ENCODE measurements at regions of chr19 and their contacts with region 1.

Region 1: DNA sequence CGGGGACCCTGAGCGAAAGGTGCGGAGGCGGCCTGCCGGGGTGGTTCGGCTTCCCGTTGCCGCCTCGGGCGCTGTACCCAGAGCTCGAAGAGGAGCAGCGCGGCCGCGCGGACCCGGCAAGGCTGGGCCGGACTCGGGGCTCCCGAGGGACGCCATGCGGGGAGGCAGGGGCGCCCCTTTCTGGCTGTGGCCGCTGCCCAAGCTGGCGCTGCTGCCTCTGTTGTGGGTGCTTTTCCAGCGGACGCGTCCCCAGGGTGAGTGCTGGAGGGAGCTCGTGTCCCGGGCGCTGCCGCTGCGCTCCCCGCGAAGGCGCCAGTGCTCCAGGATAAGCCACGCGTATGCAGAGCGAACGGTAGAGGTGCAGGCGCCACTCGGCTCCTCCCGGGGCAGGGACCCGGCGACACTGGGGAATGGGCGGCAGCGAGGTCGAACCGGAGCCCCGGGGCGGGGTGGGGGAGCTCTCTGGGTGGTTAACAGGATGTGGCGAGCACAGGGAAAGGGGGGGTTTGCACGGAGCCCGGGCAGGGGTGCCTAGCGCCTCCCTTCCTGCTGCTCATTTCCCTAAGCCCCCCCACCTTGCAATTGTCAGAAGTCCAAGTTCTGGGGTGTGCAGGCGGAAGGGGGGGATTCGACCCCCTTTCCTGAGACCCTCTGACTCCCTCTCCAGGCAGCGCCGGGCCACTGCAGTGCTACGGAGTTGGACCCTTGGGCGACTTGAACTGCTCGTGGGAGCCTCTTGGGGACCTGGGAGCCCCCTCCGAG is at the start of gene IL27RA:
- DNase-seq: peak; percentile 80
- ATAC-seq: peak; percentile 76
- H3K4me3 Mint-ChIP-seq: peak within 1 kb of the TSS; percentile 77
- H3K27ac Mint-ChIP-seq: 0 out of 2 replicates have a peak within 1 kb of the TSS, but pooled peaks have one; percentile 53
- H3K4me1 Mint-ChIP-seq: peaks cover 5% of the 10 kb centered on the region
- H3K27me3 Mint-ChIP-seq: peaks cover 15% of the 10 kb centered on the region
- CTCF ChIP-seq: peak; percentile 66; the same call in 1 of the 2 replicates
- total RNA-seq, gene IL27RA: 11.8 to 12.2 TPM (median 12.0 TPM) in 3 replicates

Region 2: DNA sequence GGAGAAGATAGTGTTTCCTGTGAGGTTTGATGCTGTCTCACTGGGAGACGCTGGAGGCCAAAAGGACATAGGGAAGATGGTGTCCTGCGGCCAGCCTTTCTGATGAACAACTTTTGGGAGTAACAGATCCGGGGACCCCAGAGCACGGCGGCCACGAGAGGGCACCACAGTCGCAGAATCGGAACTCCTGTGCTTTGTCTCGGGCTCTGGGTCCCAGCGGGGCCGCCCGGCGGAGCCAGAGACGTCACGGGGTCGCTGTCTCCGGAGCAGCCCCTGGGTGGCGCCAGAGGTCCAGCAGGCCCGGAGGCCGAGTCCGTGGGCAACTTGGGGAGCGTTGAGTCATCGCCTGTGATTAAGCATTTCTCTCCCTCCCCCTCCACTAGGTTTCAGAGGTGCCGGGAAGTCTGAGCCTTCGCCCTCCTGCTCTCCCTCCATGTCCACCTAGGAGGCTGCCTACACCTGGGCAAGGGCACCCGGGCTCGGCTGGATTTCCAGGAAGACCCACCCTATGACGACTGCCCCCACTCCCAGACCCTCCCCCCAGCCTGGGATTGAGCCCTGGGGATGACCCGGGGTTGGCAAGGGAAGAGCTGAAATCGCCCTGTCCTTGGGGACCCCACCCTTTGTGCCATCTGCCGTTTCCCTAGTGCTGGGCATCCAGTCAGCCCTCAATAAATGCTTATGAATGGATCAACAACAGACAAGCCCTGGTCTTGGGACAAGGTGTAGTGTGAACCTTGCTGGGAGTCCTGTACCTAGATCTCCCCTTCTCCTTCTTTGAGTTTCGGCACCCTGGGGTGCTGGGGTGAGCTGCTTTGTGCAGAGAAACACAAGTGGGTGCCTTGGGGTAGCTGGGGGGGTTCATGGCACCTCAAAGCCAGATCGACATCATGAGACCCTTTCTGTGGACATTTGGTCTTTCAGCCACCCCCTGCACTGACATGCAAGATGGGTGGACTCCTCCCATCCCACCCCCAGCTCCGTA is 151.5 kb before region 1 on chr19:
- CTCF ChIA-PET with region 1: interaction called, 12 read pairs
- POLR2A ChIA-PET with region 1: no interaction called
- DNase-seq: peak; percentile 98
- ATAC-seq: peak; percentile 83
- H3K4me3 Mint-ChIP-seq: peak overlapping the region; percentile 41
- H3K27ac Mint-ChIP-seq: peak overlapping the region; percentile 82
- H3K4me1 Mint-ChIP-seq: peaks cover 26% of the 10 kb centered on the region
- H3K27me3 Mint-ChIP-seq: peaks cover 36% of the 10 kb centered on the region
- CTCF ChIP-seq: peak; percentile 88

Region 3: GRCh38 chr19:13952154-13953035 is 79.5 kb before region 1 on chr19 and contains the start of gene DCAF15:
- CTCF ChIA-PET with region 1: interaction called, 14 read pairs
- POLR2A ChIA-PET with region 1: interaction called, 4 read pairs
- DNase-seq: peak; percentile 99
- ATAC-seq: peak; percentile 98
- H3K4me3 Mint-ChIP-seq: peak within 1 kb of the TSS; percentile 87
- H3K27ac Mint-ChIP-seq: peak within 1 kb of the TSS; percentile 57
- H3K4me1 Mint-ChIP-seq: peaks cover 8% of the 10 kb centered on the region
- H3K27me3 Mint-ChIP-seq: no peaks in the 10 kb centered on the region; the same call in none of the 2 replicates
- CTCF ChIP-seq: no peak
- total RNA-seq, gene DCAF15: 82.9 to 89.0 TPM (median 83.3 TPM) in 3 replicates

Region 4: DNA sequence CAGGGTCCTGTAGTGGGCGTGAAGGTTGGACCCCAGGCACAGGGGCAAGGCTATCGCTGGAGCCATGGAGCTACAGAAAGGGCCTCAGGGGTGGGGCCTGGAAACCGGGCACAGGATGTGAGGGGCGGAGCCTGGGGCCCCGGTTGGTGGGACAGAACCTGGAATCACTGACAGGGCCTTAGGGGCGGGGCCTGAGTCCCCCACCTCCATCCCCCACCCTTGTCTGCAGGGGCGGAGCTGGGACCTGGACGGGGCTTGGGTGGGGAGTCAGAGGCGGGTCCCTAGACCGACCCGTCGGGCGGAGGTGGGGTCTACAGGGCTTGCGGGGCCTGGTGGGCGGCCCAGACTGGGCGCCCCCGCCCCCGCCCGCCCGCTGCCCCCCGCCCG is 53.6 kb before region 1 on chr19:
- CTCF ChIA-PET with region 1: interaction called, 17 read pairs
- POLR2A ChIA-PET with region 1: interaction called, 5 read pairs
- DNase-seq: peak; percentile 99
- ATAC-seq: peak; percentile 93
- H3K4me3 Mint-ChIP-seq: peak overlapping the region; percentile 49
- H3K27ac Mint-ChIP-seq: peak overlapping the region; percentile 27; the same call in 1 of the 2 replicates
- H3K4me1 Mint-ChIP-seq: peaks cover 22% of the 10 kb centered on the region
- H3K27me3 Mint-ChIP-seq: no peaks in the 10 kb centered on the region; the same call in 1 of the 2 replicates
- CTCF ChIP-seq: no peak

Region 5: GRCh38 chr19:14006243-14006765 is 25.6 kb before region 1 on chr19 and contains the start of gene RFX1:
- CTCF ChIA-PET with region 1: interaction called, 19 read pairs
- POLR2A ChIA-PET with region 1: interaction called, 8 read pairs
- DNase-seq: peak; percentile 100
- ATAC-seq: peak; percentile 85
- H3K4me3 Mint-ChIP-seq: peak within 1 kb of the TSS; percentile 92
- H3K27ac Mint-ChIP-seq: peak within 1 kb of the TSS; percentile 100
- H3K4me1 Mint-ChIP-seq: peaks cover 19% of the 10 kb centered on the region
- H3K27me3 Mint-ChIP-seq: peaks cover 4% of the 10 kb centered on the region
- CTCF ChIP-seq: no peak
- total RNA-seq, gene RFX1: 20.4 to 23.2 TPM (median 21.4 TPM) in 3 replicates

Region 6: GRCh38 chr19:14059093-14059480 is 27.2 kb after region 1 on chr19:
- CTCF ChIA-PET with region 1: interaction called, 42 read pairs
- POLR2A ChIA-PET with region 1: no interaction called
- DNase-seq: peak; percentile 78
- ATAC-seq: peak; percentile 50
- H3K4me3 Mint-ChIP-seq: peak overlapping the region; percentile 86
- H3K27ac Mint-ChIP-seq: no peak overlapping the region
- H3K4me1 Mint-ChIP-seq: peaks cover 16% of the 10 kb centered on the region
- H3K27me3 Mint-ChIP-seq: peaks cover 32% of the 10 kb centered on the region
- CTCF ChIP-seq: peak; percentile 87

Measured in WTC11 (cell line).